ENCODE measurements at regions of chr12 and their contacts with region 1.

Region 1: GRCh38 chr12:3885277-3886094 is 12.3 kb upstream of the PARP11 start:
- DNase-seq: peak; percentile 29

Region 2: DNA sequence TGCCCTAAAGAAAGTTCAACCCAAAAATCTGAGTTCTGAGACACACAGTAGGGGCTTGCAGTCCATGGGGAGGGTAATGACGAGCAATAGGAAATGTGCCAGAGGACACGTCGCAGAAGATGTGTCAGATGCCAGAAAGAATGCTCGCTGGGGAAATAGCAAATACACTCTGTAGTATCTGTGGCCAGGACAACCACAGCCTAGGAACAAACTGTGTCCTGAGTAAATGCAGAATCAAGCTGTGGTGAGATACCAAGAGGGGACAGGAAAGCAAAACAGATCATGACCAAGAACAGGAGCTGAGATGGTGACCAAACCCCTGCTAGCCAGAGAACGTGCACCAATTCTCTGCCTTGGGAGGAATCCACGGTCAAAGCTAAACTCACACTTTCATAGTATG is 141.7 kb before region 1 on chr12:
- in situ Hi-C with region 1: no loop called
- DNase-seq: no peak

Region 3: DNA sequence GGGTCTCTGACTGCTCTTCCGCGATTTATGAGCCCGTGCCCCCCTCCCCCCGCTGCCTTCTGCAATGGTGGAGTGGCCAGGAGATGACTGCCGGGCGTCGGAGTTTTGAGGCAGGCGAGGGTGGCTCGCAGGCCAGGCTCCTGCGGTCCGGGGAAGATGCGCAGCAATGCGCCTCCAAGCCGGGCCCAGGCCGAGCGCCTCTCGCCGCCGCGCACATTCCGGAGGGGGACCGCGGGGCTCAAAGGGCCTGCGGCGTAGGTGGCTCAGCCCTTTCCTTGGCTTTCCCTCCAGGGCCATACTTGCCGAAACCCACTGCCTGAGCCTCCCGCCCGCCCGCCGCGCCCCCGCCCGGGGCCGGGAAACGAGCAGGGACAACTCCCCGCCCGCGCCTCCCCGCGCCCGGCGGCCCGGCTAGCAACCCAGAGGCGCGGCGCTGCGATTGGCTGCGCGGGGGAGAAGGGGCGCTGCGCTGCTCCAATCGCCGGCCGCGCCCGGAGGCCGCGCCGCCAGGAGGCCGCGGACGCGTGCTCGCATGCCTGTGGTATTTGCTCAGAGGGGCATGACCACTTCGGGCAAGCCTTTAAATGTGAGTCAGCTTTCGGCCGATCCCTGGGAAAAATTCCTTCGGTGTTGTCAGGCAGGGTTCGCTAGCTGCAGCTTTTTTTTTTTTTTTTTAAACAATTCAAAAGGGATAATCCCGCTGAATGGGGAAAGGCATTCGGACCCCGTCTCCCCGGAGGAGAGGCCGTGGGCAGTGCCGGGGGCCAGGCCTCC is 145.6 kb after region 1 on chr12:
- in situ Hi-C with region 1: loop called (anchors 25 kb)
- DNase-seq: peak; percentile 97

Region 4: GRCh38 chr12:4271717-4272423 is 386.4 kb after region 1 on chr12:
- in situ Hi-C with region 1: loop called (anchors 25 kb)
- DNase-seq: peak; percentile 59